Activated T-helper 1 cell treated with anti-CD3 and anti-CD28 coated beads, Interleukin-12 subunit alpha, Interleukin-12 subunit beta, Interleukin-2, Interleukin-4 antibody, amounts not matched to agents 30 ng/mL and 10 ng/mL and 1 ng/mL, durations not matched to agents 14 hours and 24 hours and 36 hours (primary cell): ENCODE measurements at regions of chr12 and their contacts with region 1.

Region 1: GRCh38 chr12:123382684-123383083 is 1.2 kb upstream of the KMT5A start:
- DNase-seq: no peak
- H3K4me3 Mint-ChIP-seq: peak overlapping the region; percentile 72
- H3K27ac Mint-ChIP-seq: no peak overlapping the region
- H3K4me1 Mint-ChIP-seq: peaks cover 16% of the 10 kb centered on the region
- H3K27me3 Mint-ChIP-seq: no peaks in the 10 kb centered on the region

Region 2: GRCh38 chr12:123271001-123271729 is 111.5 kb before region 1 on chr12:
- intact Hi-C with region 1: loop called (anchors 1 kb)
- DNase-seq: peak; percentile 68
- H3K4me3 Mint-ChIP-seq: no peak overlapping the region
- H3K27ac Mint-ChIP-seq: no peak overlapping the region
- H3K4me1 Mint-ChIP-seq: peaks cover 9% of the 10 kb centered on the region
- H3K27me3 Mint-ChIP-seq: peaks cover 5% of the 10 kb centered on the region

Region 3: GRCh38 chr12:123445388-123446351 is 63.0 kb after region 1 on chr12:
- intact Hi-C with region 1: no loop called
- DNase-seq: no peak
- H3K4me3 Mint-ChIP-seq: peak overlapping the region; percentile 27
- H3K27ac Mint-ChIP-seq: peak overlapping the region; percentile 57
- H3K4me1 Mint-ChIP-seq: peaks cover 25% of the 10 kb centered on the region
- H3K27me3 Mint-ChIP-seq: no peaks in the 10 kb centered on the region